B cell (primary cell): ENCODE measurements at regions of chrX and their contacts with region 1.

Region 1: DNA sequence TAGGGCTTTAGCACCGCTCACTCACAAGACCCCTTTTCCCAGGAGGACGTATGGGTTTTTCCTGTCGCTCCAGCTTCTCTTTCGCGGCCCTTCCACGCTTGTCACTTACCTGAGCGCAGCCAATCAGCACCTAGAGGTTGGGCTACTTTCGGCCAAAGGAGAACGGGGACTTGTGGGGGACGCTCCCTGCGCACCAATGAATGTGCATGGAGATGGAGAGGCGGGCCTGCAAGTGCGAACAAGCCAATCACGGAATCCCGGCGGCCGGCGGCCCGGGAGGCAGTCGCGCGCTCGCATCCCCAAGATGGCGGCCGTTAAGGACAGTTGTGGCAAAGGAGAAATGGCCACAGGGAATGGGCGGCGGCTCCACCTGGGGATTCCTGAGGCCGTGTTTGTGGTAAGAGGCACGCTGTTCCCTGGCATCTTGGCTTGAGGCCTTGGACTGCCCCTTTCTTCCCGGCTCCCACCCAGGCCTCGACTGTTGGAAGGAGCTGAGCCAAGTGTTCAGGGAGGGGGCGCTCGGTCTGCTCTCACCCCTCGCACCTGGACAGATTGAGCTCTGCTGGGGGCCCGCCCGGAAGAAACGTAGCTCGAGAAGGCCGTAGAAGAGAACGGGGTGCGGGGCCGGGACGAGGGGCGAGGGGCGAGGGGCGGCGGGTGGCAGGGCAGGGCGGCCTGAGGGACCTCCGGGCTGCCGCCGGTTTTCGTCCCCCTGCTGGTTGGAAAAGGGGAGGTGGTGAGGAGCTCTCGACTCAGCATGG is at the start of gene VBP1:
- DNase-seq: peak; percentile 90
- ATAC-seq: peak; percentile 98
- H3K4me3 ChIP-seq: peak within 1 kb of the TSS; percentile 74 to 85 (median 79)
- H3K4me3 Mint-ChIP-seq: peak within 1 kb of the TSS; percentile 93
- H3K27ac ChIP-seq: peak within 1 kb of the TSS; percentile 79 to 87
- H3K27ac Mint-ChIP-seq: peak within 1 kb of the TSS; percentile 91
- H3K4me1 ChIP-seq: peaks cover 10 to 11% of the 10 kb centered on the region in 2 donors
- H3K4me1 Mint-ChIP-seq: peaks cover 25% of the 10 kb centered on the region
- H3K27me3 ChIP-seq: no peaks in the 10 kb centered on the region
- H3K27me3 Mint-ChIP-seq: no peaks in the 10 kb centered on the region
- CTCF ChIP-seq: peak; percentile 64
- total RNA-seq, gene VBP1: 29.7 and 30.0 TPM in 2 replicates

Region 2: GRCh38 chrX:154855256-154855655 is 361.1 kb before region 1 on chrX:
- CTCF ChIA-PET with region 1: no interaction called
- POLR2A ChIA-PET with region 1: no interaction called
- intact Hi-C with region 1: no loop called
- DNase-seq: no peak
- ATAC-seq: no peak
- H3K4me3 ChIP-seq: no peak overlapping the region
- H3K4me3 Mint-ChIP-seq: no peak overlapping the region
- H3K27ac ChIP-seq: no peak overlapping the region
- H3K27ac Mint-ChIP-seq: no peak overlapping the region
- H3K4me1 ChIP-seq: no peaks in the 10 kb centered on the region
- H3K4me1 Mint-ChIP-seq: no peaks in the 10 kb centered on the region
- H3K27me3 ChIP-seq: no peaks in the 10 kb centered on the region
- H3K27me3 Mint-ChIP-seq: no peaks in the 10 kb centered on the region
- CTCF ChIP-seq: no peak

Region 3: DNA sequence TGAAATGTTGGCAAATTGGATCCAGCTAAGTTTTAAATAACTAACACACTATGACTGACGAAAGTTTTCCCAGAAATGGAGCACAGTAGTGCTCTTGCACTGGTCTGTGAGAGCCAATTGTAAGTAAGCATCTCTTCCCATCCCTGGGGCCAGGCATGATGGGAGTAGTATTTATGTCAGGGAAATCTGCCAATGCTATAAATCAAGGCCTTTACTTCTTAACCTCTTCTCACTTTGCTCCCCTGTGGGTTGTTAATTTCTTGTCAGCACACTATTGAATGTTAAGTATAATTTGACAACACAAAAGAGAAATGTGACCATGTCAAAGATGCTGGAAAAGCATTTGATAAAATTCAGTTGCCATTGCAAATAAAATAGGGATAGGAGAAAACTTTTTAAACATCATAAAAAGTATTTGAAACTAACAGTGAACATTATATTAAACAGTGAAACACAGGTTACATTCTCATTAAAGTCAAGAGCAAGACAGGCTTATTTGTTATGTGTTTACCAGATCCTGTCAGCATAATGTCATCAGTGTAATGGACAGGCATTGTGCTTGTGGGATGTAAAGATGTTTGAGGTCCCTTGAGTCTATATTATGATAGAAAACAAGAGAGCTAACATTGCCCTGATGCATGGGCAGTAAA is 325.2 kb before region 1 on chrX:
- CTCF ChIA-PET with region 1: no interaction called
- POLR2A ChIA-PET with region 1: no interaction called
- intact Hi-C with region 1: no loop called
- DNase-seq: no peak
- ATAC-seq: no peak
- H3K4me3 ChIP-seq: no peak overlapping the region
- H3K4me3 Mint-ChIP-seq: no peak overlapping the region
- H3K27ac ChIP-seq: no peak overlapping the region
- H3K27ac Mint-ChIP-seq: no peak overlapping the region
- H3K4me1 ChIP-seq: no peaks in the 10 kb centered on the region
- H3K4me1 Mint-ChIP-seq: peaks cover 5% of the 10 kb centered on the region
- H3K27me3 ChIP-seq: no peaks in the 10 kb centered on the region
- H3K27me3 Mint-ChIP-seq: no peaks in the 10 kb centered on the region
- CTCF ChIP-seq: no peak

Region 4: DNA sequence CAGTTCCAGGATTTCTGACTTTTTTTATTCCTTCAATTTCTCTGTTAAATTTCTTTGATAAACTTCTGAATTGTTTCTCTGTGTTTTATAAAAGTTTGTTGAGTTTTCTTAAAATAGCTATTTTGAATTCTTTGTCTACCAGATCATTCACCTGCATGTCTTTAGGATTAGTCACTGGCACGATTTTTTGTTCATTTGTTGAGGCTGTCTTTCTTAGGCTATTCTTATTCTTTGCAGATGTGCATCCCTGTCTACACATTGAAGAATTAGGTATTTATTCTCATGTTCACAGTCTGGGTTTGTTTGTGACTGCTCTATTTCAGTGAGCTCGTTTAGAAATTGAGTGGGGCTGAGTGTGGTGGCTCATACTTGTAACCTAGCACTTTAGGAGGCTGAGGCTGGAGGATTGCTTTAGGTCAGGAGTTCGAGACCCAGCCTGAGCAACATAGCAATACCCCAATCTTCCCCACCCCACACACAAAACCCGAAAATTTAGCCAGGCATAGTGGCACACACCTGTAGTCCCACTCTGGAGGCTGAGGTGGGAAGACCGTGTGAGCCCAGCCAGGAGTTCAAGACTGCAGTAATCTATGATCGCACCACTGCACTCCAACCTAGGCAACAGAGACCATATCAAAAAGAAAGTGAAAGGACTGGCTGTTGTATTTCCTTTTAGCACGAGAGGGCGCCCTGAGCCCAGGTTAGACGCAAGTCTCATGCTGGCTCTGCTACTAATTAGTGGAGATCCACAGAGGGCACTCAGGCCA is 235.8 kb before region 1 on chrX:
- CTCF ChIA-PET with region 1: interaction called, 3 read pairs
- POLR2A ChIA-PET with region 1: no interaction called
- intact Hi-C with region 1: loop called (anchors 2 kb)
- DNase-seq: peak; percentile 82
- ATAC-seq: peak; percentile 93
- H3K4me3 ChIP-seq: peak overlapping the region in 4 of 5 experiments; percentile 6 to 40 (median 22)
- H3K4me3 Mint-ChIP-seq: peak overlapping the region; percentile 79
- H3K27ac ChIP-seq: no peak overlapping the region
- H3K27ac Mint-ChIP-seq: no peak overlapping the region
- H3K4me1 ChIP-seq: peaks cover 0 to 9% of the 10 kb centered on the region in 2 donors
- H3K4me1 Mint-ChIP-seq: peaks cover 2% of the 10 kb centered on the region
- H3K27me3 ChIP-seq: no peaks in the 10 kb centered on the region
- H3K27me3 Mint-ChIP-seq: peaks cover 8% of the 10 kb centered on the region
- CTCF ChIP-seq: peak; percentile 72

Region 5: GRCh38 chrX:155070975-155071693 is 145.2 kb before region 1 on chrX and contains the starts of genes BRCC3, CMC4 and MTCP1:
- CTCF ChIA-PET with region 1: no interaction called
- POLR2A ChIA-PET with region 1: no interaction called
- intact Hi-C with region 1: loop called (anchors 1 kb)
- DNase-seq: peak; percentile 88
- ATAC-seq: peak; percentile 84
- H3K4me3 ChIP-seq: peak within 1 kb of the TSS; percentile 62 to 81 (median 77)
- H3K4me3 Mint-ChIP-seq: peak within 1 kb of the TSS; percentile 94
- H3K27ac ChIP-seq: peak within 1 kb of the TSS; percentile 88 to 89
- H3K27ac Mint-ChIP-seq: peak within 1 kb of the TSS; percentile 95
- H3K4me1 ChIP-seq: peaks cover 17 to 34% of the 10 kb centered on the region in 2 donors
- H3K4me1 Mint-ChIP-seq: peaks cover 50% of the 10 kb centered on the region
- H3K27me3 ChIP-seq: no peaks in the 10 kb centered on the region
- H3K27me3 Mint-ChIP-seq: no peaks in the 10 kb centered on the region
- CTCF ChIP-seq: no peak
- total RNA-seq, gene BRCC3: 14.3 and 16.9 TPM in 2 replicates
- total RNA-seq, gene CMC4: 4.4 and 6.0 TPM in 2 replicates
- total RNA-seq, gene MTCP1: 13.4 and 20.3 TPM in 2 replicates

Region 6: GRCh38 chrX:155179346-155179986 is 36.9 kb before region 1 on chrX:
- CTCF ChIA-PET with region 1: no interaction called
- POLR2A ChIA-PET with region 1: no interaction called
- intact Hi-C with region 1: no loop called
- DNase-seq: no peak
- ATAC-seq: no peak
- H3K4me3 ChIP-seq: no peak overlapping the region
- H3K4me3 Mint-ChIP-seq: no peak overlapping the region
- H3K27ac ChIP-seq: no peak overlapping the region
- H3K27ac Mint-ChIP-seq: no peak overlapping the region
- H3K4me1 ChIP-seq: no peaks in the 10 kb centered on the region
- H3K4me1 Mint-ChIP-seq: no peaks in the 10 kb centered on the region
- H3K27me3 ChIP-seq: no peaks in the 10 kb centered on the region
- H3K27me3 Mint-ChIP-seq: no peaks in the 10 kb centered on the region
- CTCF ChIP-seq: no peak

Region 7: DNA sequence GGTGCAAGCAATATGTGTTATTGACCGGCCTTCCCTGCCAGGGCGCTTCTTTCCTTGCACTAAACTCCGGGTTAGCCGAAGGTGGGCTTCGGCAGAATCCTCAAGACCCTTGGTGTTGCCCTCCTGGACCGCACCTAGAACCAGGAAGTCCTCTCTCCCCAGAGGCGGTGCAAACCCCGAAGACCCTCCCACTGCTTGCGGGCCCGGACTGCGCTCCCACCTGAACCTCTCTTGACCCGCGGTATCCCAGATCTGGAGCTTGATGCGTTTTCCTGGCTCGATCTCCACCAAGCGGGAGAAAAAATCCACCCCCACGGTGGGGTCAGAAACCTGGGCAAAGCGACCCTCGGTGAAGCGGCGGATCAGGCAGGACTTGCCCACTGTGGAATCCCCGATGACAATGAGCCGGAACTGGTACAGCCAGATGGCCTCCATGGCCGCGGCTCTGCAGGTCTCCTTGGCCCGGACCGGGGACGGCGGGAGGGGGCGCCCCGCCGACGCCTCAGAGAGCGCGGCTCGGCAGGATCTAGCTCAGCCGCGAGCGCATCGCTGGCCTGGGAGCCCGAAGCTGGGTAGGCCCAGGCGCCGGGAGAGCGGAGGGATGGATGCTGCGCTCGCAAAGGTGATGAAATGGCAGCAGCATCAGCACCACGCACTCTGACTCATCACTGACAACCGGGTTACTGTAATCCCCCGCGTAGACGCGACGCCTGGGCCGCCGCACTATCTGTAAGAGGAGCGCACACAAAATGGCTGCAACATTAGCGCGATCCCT is 47.7 kb after region 1 on chrX and contains the start of gene RAB39B:
- CTCF ChIA-PET with region 1: interaction called, 7 read pairs
- POLR2A ChIA-PET with region 1: interaction called, 5 read pairs
- intact Hi-C with region 1: loop called (anchors 1 kb)
- DNase-seq: peak; percentile 75
- ATAC-seq: peak; percentile 86
- H3K4me3 ChIP-seq: peak within 1 kb of the TSS; percentile 5 to 77 (median 64)
- H3K4me3 Mint-ChIP-seq: peak within 1 kb of the TSS; percentile 88
- H3K27ac ChIP-seq: peak within 1 kb of the TSS; percentile 66 to 89
- H3K27ac Mint-ChIP-seq: peak within 1 kb of the TSS; percentile 85
- H3K4me1 ChIP-seq: peaks cover 4 to 11% of the 10 kb centered on the region in 2 donors
- H3K4me1 Mint-ChIP-seq: peaks cover 20% of the 10 kb centered on the region
- H3K27me3 ChIP-seq: no peaks in the 10 kb centered on the region
- H3K27me3 Mint-ChIP-seq: no peaks in the 10 kb centered on the region
- CTCF ChIP-seq: no peak
- total RNA-seq, gene RAB39B: 7.8 and 8.8 TPM in 2 replicates

Region 8: DNA sequence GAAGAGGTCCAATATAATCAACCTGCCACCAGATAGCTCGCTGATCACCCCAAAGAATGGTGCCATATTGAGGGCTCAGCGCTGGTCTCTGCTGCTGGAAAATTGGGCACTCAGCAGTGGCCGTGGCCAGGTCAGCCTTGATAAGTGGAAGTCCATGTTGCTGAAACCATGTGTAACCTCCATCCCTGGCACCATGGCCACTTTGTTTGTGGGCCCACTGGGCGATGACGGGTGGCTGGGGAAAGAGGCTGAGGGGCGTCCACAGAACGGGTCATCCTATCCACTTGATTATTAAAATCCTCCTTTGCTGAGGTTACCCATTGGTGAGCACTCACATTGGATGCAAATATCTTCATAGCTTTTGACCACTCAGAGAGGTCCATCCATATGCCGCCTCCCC is 173.3 kb after region 1 on chrX:
- CTCF ChIA-PET with region 1: no interaction called
- POLR2A ChIA-PET with region 1: no interaction called
- intact Hi-C with region 1: no loop called
- DNase-seq: no peak
- ATAC-seq: no peak
- H3K4me3 ChIP-seq: no peak overlapping the region
- H3K4me3 Mint-ChIP-seq: no peak overlapping the region
- H3K27ac ChIP-seq: no peak overlapping the region
- H3K27ac Mint-ChIP-seq: no peak overlapping the region
- H3K4me1 ChIP-seq: no peaks in the 10 kb centered on the region
- H3K4me1 Mint-ChIP-seq: peaks cover 20% of the 10 kb centered on the region
- H3K27me3 ChIP-seq: no peaks in the 10 kb centered on the region
- H3K27me3 Mint-ChIP-seq: no peaks in the 10 kb centered on the region
- CTCF ChIP-seq: no peak